H1 (cell line): ENCODE measurements at regions of chr4 and their contacts with region 1.

Region 1: GRCh38 chr4:109998867-109999584 is 86.3 kb downstream of the EGF start:
- DNase-seq: no peak
- H3K4me3 ChIP-seq: no peak overlapping the region
- H3K27ac ChIP-seq: no peak overlapping the region
- H3K4me1 ChIP-seq: no peaks in the 10 kb centered on the region
- H3K27me3 ChIP-seq: no peaks in the 10 kb centered on the region
- CTCF ChIP-seq: peak in 2 of 3 experiments; percentile 62 to 76; a peak in 3 of 4 replicates
- EP300 ChIP-seq: no peak
- POLR2A ChIP-seq: no peak
- RAD21 ChIP-seq: peak; percentile 81 to 86

Region 2: DNA sequence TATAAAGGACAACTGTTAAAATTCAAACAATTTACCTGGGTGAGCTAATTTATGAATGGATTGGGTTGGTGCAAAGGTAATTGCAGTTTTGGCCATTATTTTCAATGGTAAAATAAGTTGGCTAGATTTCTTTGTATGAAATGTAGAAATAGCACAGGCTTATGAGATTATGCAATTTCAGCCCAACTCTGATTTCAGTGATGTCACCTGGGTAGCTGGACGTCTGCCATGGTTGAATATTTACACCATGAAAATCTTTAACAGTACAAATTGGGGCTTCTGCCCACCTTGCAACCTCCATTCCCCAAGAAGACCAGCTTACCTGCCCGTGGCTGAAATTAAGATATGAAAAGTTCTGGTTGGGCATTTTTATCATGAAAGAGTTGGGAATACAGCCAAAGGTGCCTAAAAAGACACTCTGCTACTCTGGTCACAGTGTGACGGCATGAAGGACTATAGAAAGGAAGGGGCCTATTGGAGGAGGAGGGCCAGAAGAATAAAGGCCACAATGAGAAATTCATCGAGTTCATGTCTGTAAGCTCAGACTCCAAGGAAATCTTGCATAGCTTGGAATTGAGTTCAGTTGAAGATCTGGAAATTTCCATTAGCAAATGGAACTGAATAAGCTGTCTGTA is 56.6 kb before region 1 on chr4:
- CTCF ChIA-PET with region 1: no interaction called
- POLR2A ChIA-PET with region 1: no interaction called
- DNase-seq: no peak
- H3K4me3 ChIP-seq: no peak overlapping the region
- H3K27ac ChIP-seq: no peak overlapping the region
- H3K4me1 ChIP-seq: no peaks in the 10 kb centered on the region
- H3K27me3 ChIP-seq: no peaks in the 10 kb centered on the region
- CTCF ChIP-seq: no peak
- EP300 ChIP-seq: no peak
- POLR2A ChIP-seq: no peak
- RAD21 ChIP-seq: no peak

Region 3: GRCh38 chr4:109977854-109978501 is 21.0 kb before region 1 on chr4:
- CTCF ChIA-PET with region 1: interaction called, 11 read pairs
- POLR2A ChIA-PET with region 1: no interaction called
- DNase-seq: no peak
- H3K4me3 ChIP-seq: no peak overlapping the region
- H3K27ac ChIP-seq: no peak overlapping the region
- H3K4me1 ChIP-seq: peaks cover 0 to 3% (median under 1%) of the 10 kb centered on the region in 4 experiments; a peak in 3 of 7 replicates
- H3K27me3 ChIP-seq: peaks cover 0 to 1% (median 0%) of the 10 kb centered on the region in 4 experiments; a peak in 1 of 7 replicates
- CTCF ChIP-seq: peak in 2 of 3 experiments; percentile 8 to 36; a peak in 2 of 4 replicates
- EP300 ChIP-seq: no peak
- POLR2A ChIP-seq: no peak
- RAD21 ChIP-seq: peak; percentile 57 to 65

Region 4: DNA sequence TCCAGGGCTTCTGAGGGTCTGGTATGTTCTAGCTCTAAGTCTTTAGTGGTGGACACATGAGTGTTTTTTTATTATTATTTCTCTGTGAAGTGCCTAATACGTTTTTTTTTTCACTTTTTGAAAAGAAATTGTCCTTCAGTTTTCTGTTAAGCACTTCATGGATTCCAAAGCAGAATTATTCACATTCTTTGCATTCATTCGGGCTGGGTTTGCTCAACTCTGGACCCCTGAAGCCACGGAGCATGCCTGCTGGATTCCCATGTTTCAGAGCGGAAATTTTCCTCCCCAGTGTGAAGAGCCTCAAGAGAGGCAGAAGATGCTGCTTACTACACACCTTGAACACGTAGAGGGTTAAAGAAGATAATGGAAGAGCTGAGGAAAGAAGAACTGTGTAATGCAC is 21.1 kb after region 1 on chr4:
- CTCF ChIA-PET with region 1: interaction called, 13 read pairs
- POLR2A ChIA-PET with region 1: no interaction called
- DNase-seq: no peak
- H3K4me3 ChIP-seq: no peak overlapping the region
- H3K27ac ChIP-seq: no peak overlapping the region
- H3K4me1 ChIP-seq: peaks cover 0 to 3% (median 0%) of the 10 kb centered on the region in 4 experiments; a peak in 2 of 7 replicates
- H3K27me3 ChIP-seq: no peaks in the 10 kb centered on the region
- CTCF ChIP-seq: no peak
- EP300 ChIP-seq: no peak
- POLR2A ChIP-seq: no peak
- RAD21 ChIP-seq: no peak

Region 5: DNA sequence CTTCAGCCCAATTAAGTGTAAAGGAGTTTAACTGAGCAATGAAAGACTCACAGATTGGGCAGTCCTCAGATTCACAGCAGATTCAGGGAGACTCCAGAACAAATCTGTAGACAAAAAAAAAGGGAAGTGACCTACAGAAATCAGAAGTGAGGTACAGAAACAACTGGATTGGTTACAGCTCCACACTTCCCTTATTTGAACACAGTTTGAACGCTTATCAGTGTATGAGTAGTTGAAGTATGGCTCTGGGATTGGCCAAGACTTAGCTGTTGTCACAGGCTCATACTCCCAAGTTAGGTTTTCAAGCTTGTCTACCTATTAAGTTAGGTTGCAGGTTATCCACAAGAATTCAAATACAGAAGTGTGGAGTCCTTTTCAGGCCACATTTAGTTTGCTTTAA is 311.8 kb after region 1 on chr4:
- CTCF ChIA-PET with region 1: interaction called, 10 read pairs
- POLR2A ChIA-PET with region 1: no interaction called
- DNase-seq: no peak
- H3K4me3 ChIP-seq: no peak overlapping the region
- H3K27ac ChIP-seq: no peak overlapping the region
- H3K4me1 ChIP-seq: no peaks in the 10 kb centered on the region
- H3K27me3 ChIP-seq: no peaks in the 10 kb centered on the region
- CTCF ChIP-seq: no peak
- EP300 ChIP-seq: no peak
- POLR2A ChIP-seq: no peak
- RAD21 ChIP-seq: no peak